ENCODE measurements at regions of chr3 and their contacts with region 1.

Region 1: GRCh38 chr3:79032686-79033318 is 735.0 kb downstream of the ROBO1 start:
- DNase-seq: no peak
- H3K4me3 ChIP-seq: no peak overlapping the region
- H3K27ac ChIP-seq: no peak overlapping the region
- H3K4me1 ChIP-seq: no peaks in the 10 kb centered on the region
- H3K27me3 ChIP-seq: no peaks in the 10 kb centered on the region
- CTCF ChIP-seq: peak in 7 of 11 experiments; percentile 22 to 56 (median 44)
- POLR2A ChIP-seq: no peak

Region 2: GRCh38 chr3:78660957-78661356 is 371.8 kb before region 1 on chr3:
- intact Hi-C with region 1: loop called (anchors 5 kb)
- DNase-seq: no peak
- H3K4me3 ChIP-seq: no peak overlapping the region
- H3K27ac ChIP-seq: no peak overlapping the region
- H3K4me1 ChIP-seq: no peaks in the 10 kb centered on the region
- H3K27me3 ChIP-seq: no peaks in the 10 kb centered on the region
- CTCF ChIP-seq: no peak
- POLR2A ChIP-seq: no peak

Region 3: GRCh38 chr3:78919021-78919755 is 113.6 kb before region 1 on chr3:
- intact Hi-C with region 1: no loop called
- DNase-seq: no peak
- H3K4me3 ChIP-seq: no peak overlapping the region
- H3K27ac ChIP-seq: no peak overlapping the region
- H3K4me1 ChIP-seq: peaks cover 0 to 3% (median 0%) of the 10 kb centered on the region in 6 donors
- H3K27me3 ChIP-seq: no peaks in the 10 kb centered on the region
- CTCF ChIP-seq: no peak
- POLR2A ChIP-seq: no peak

Region 4: GRCh38 chr3:78988324-78988723 is 44.5 kb before region 1 on chr3:
- intact Hi-C with region 1: no loop called
- DNase-seq: no peak
- H3K4me3 ChIP-seq: no peak overlapping the region
- H3K27ac ChIP-seq: no peak overlapping the region
- H3K4me1 ChIP-seq: no peaks in the 10 kb centered on the region
- H3K27me3 ChIP-seq: no peaks in the 10 kb centered on the region
- CTCF ChIP-seq: peak in 1 of 11 experiments; percentile 14
- POLR2A ChIP-seq: no peak